Activated T-helper 1 cell treated with anti-CD3 and anti-CD28 coated beads, Interleukin-12 subunit alpha, Interleukin-12 subunit beta, Interleukin-2, Interleukin-4 antibody, amounts not matched to agents 30 ng/mL and 10 ng/mL and 1 ng/mL, durations not matched to agents 14 hours and 24 hours and 36 hours (primary cell): ENCODE measurements at regions of chr10 and their contacts with region 1.

Region 1: DNA sequence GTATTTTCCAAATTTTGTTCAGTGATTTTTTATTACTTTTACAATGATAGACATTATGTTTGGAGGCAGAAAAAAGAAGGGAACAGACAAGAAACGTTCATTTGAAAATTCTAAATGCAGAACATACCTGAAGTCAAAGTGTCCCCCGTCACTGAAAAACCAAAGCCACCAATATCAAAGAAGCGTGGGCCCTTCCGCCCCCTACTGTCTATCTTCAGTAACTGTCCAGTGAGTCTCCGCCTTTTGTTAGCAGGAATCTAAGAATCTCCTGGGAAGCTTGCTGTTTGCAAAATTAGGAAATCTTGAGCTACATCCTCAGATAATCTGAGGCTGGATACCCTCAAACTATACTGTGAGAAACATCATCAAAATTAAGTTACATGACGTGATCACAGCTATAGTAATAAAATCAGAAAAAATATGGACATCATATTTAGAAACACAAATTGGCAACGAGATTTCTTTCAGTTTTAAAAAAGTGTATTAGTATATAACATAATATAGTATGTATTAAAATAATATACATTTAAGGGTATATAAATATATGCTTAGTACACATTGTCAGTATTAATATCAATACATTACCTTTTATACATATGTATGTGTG is 169.3 kb upstream of the AKR1E2 start:
- DNase-seq: no peak
- H3K4me3 Mint-ChIP-seq: no peak overlapping the region
- H3K27ac Mint-ChIP-seq: no peak overlapping the region
- H3K4me1 Mint-ChIP-seq: peaks cover 10% of the 10 kb centered on the region
- H3K27me3 Mint-ChIP-seq: peaks cover 18% of the 10 kb centered on the region

Region 2: DNA sequence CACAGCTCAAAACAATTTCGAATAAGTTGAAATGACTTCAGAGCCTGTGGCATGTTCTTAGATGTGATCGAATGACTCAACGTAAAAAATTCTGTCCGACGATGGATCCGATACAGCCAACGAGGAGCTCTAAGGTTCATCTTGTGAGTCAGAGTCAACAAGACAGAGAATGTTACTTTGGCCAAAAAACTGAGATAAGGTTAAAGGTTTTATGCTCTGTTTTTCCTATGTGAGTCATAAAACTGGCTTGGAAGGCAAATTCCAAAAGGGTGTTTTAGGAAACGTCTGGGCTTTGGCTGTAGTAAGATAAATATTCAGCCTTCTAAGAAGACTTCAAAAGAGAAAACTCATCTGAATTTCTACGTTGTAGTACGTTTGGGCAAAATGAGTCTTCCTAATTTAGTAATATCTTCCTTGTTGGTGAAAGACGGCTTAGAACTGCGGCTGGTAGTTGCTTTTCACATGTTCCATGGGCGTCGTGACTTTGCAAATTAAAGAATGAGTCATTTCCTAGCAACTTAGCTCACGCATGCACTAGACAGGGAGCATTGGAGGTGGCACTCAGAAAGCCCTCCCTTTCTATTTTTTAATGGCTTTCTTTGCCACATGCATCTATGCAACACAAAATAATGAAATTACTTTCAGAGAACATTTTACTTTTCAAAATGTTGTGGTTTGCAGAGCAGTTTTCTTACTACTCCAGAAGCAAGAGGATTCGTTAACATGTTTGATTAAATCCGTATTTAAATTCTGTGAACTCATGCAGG is 1561.1 kb before region 1 on chr10:
- intact Hi-C with region 1: loop called (anchors 10 kb)
- DNase-seq: peak; percentile 57
- H3K4me3 Mint-ChIP-seq: peak overlapping the region; percentile 69
- H3K27ac Mint-ChIP-seq: peak overlapping the region; percentile 97
- H3K4me1 Mint-ChIP-seq: peaks cover 70% of the 10 kb centered on the region
- H3K27me3 Mint-ChIP-seq: no peaks in the 10 kb centered on the region

Region 3: GRCh38 chr10:3239066-3239919 is 1417.4 kb before region 1 on chr10:
- intact Hi-C with region 1: loop called (anchors 1 kb)
- DNase-seq: peak; percentile 54
- H3K4me3 Mint-ChIP-seq: no peak overlapping the region
- H3K27ac Mint-ChIP-seq: no peak overlapping the region
- H3K4me1 Mint-ChIP-seq: no peaks in the 10 kb centered on the region
- H3K27me3 Mint-ChIP-seq: peaks cover 48% of the 10 kb centered on the region

Region 4: GRCh38 chr10:3668276-3668965 is 988.3 kb before region 1 on chr10:
- intact Hi-C with region 1: loop called (anchors 5 kb)
- DNase-seq: peak; percentile 55
- H3K4me3 Mint-ChIP-seq: peak overlapping the region; percentile 82
- H3K27ac Mint-ChIP-seq: peak overlapping the region; percentile 89
- H3K4me1 Mint-ChIP-seq: peaks cover 44% of the 10 kb centered on the region
- H3K27me3 Mint-ChIP-seq: peaks cover 3% of the 10 kb centered on the region

Region 5: GRCh38 chr10:3873728-3874461 is 782.8 kb before region 1 on chr10:
- intact Hi-C with region 1: loop called (anchors 2 kb)
- DNase-seq: no peak
- H3K4me3 Mint-ChIP-seq: peak overlapping the region; percentile 62
- H3K27ac Mint-ChIP-seq: peak overlapping the region; percentile 97
- H3K4me1 Mint-ChIP-seq: peaks cover 69% of the 10 kb centered on the region
- H3K27me3 Mint-ChIP-seq: no peaks in the 10 kb centered on the region

Region 6: GRCh38 chr10:4512671-4513240 is 143.9 kb before region 1 on chr10:
- intact Hi-C with region 1: loop called (anchors 2 kb)
- DNase-seq: no peak
- H3K4me3 Mint-ChIP-seq: no peak overlapping the region
- H3K27ac Mint-ChIP-seq: no peak overlapping the region
- H3K4me1 Mint-ChIP-seq: peaks cover 12% of the 10 kb centered on the region
- H3K27me3 Mint-ChIP-seq: peaks cover 13% of the 10 kb centered on the region

Region 7: GRCh38 chr10:5274795-5275194 is 618.1 kb after region 1 on chr10:
- intact Hi-C with region 1: no loop called
- DNase-seq: no peak
- H3K4me3 Mint-ChIP-seq: no peak overlapping the region
- H3K27ac Mint-ChIP-seq: no peak overlapping the region
- H3K4me1 Mint-ChIP-seq: peaks cover 37% of the 10 kb centered on the region
- H3K27me3 Mint-ChIP-seq: no peaks in the 10 kb centered on the region